ENCODE measurements at regions of chr6 and their contacts with region 1.

Region 1: DNA sequence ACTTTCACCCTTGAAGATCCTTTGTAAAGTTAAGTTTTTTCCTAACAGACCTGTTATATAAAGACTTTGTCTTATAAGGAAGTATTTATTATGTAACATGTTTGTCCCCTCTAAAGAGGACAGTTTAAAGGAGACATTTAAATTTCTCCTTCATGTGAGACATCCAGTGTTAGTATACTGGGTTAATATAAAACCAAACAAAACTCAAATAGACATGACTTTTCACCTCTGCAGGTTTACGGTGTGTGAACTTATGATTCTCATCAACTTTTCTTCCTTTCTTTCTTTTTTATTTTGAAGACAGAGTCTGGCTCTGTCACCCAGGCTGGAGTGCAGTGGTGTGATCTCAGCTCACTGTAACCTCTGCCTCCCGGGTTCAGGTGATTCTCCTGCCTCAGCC is 17.4 kb upstream of the MPC1 start:
- DNase-seq: no peak
- H3K4me3 ChIP-seq: no peak overlapping the region
- H3K27ac ChIP-seq: no peak overlapping the region
- H3K4me1 ChIP-seq: peaks cover 0 to 3% (median 2%) of the 10 kb centered on the region in 4 experiments; a peak in 3 of 7 replicates
- H3K27me3 ChIP-seq: no peaks in the 10 kb centered on the region
- CTCF ChIP-seq: no peak
- EP300 ChIP-seq: no peak
- POLR2A ChIP-seq: no peak
- RAD21 ChIP-seq: no peak

Region 2: DNA sequence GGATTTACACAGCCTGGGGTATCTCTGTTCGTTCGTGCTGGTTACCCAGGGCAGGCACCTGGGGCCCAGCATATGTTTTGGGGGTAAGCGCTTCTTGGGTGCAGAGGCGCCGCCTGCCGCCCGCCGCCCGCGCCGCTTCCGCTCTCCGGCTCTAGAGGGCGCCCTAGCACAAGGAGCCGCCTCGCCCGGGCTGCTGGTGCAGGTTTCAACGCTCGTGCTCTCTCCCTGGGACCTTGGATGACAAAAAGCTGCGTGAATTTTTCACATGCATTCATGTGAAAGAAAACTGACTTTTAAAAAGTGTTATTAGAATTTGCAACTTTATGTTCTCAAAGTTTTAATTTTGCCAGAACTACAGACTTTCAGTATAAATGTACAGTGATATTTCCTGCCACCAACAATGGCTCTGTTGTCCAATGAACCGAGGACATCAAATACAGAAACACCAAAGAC is 124.4 kb before region 1 on chr6:
- CTCF ChIA-PET with region 1: interaction called, 64 read pairs
- POLR2A ChIA-PET with region 1: no interaction called
- DNase-seq: peak in 1 of 2 experiments; percentile 98
- H3K4me3 ChIP-seq: no peak overlapping the region
- H3K27ac ChIP-seq: no peak overlapping the region
- H3K4me1 ChIP-seq: no peaks in the 10 kb centered on the region
- H3K27me3 ChIP-seq: peaks cover 0 to 8% (median 0%) of the 10 kb centered on the region in 4 experiments; a peak in 2 of 7 replicates
- CTCF ChIP-seq: peak; percentile 88 to 99 (median 88)
- EP300 ChIP-seq: no peak
- POLR2A ChIP-seq: no peak
- RAD21 ChIP-seq: peak; percentile 97 to 98

Region 3: DNA sequence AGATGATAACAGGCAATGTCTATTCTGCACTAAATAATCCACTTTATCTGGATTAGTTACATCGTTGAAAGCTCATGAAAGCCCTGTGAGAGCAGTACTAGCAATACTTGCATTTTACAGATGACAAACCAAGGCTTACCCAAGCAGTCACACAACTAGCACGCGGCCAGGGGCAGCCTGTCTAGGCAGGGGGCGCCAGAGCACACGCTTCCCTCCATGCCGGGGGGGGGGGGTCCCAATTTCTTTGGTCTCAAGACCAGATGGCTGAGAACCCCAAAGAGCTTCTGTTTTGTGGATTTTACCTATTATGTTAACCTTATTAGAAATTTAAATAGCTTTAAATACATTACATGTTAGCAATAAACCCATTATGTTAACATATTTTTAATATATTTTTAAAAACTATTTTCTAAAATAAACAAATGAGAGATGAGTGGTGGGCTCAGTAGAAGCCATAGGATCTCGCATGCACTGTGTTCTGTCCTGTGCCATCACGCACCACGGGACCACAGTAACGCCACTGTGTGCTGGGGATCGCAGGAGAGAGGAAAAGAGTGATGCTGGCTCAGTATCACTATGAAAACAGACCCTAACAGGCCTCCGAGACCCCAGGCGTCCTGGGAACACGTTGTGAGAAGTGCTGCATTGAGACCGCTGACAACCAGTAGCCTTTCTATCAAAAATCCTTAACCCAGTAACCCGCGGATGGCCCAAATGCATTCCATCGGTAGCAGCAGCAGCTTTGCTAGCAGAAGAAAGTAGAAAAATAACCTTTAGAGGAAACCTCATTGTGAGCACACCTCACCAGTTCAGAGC is 86.7 kb before region 1 on chr6:
- CTCF ChIA-PET with region 1: interaction called, 120 read pairs
- POLR2A ChIA-PET with region 1: no interaction called
- DNase-seq: peak in 1 of 2 experiments; percentile 65
- H3K4me3 ChIP-seq: no peak overlapping the region
- H3K27ac ChIP-seq: no peak overlapping the region
- H3K4me1 ChIP-seq: peaks cover 0 to 4% (median 1%) of the 10 kb centered on the region in 4 experiments; a peak in 1 of 7 replicates
- H3K27me3 ChIP-seq: peaks cover 9 to 21% (median 20%) of the 10 kb centered on the region in 4 experiments
- CTCF ChIP-seq: peak; percentile 78 to 88 (median 82)
- EP300 ChIP-seq: no peak
- POLR2A ChIP-seq: no peak
- RAD21 ChIP-seq: peak; percentile 82 to 85

Region 4: DNA sequence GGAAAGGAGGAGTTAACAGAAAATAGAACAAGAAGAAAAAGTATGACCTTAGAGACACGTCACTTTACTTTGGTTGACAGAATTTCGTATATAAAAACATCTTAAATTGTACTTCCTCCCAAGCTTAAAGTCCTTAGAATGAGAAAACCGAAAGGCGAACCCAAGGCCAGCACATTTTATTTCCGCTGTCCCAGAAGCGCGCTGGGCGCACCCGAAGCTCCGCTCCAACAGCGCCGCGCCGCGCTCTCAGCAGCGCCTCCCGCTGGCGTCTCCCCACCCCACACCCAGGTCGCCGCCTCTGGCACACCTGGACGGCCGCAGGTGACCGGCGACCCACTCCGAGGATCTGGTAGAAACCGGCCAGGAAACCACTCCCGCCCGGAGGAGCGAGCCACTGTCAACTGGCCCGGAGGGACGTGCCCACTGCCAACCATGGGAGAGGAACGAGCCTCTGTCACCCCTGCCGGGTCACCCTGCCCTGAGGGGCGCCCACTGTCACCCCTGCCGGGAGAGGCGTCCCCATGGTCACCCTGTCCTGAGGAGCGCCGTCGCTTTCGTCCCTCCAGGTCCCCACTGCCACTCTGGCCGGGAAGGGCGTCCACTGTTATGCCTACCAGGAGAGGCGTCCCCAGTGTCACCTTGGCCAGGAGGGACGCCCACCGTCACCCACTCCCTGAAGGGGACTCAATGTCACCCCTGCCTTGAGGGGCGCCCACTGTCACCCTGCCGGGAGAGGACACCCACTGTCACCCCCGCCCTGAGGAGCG is 18.3 kb before region 1 on chr6:
- CTCF ChIA-PET with region 1: interaction called, 14 read pairs
- POLR2A ChIA-PET with region 1: interaction called, 3 read pairs
- DNase-seq: peak in 1 of 2 experiments; percentile 93
- H3K4me3 ChIP-seq: peak overlapping the region; percentile 59 to 83 (median 62)
- H3K27ac ChIP-seq: no peak overlapping the region
- H3K4me1 ChIP-seq: peaks cover 0 to 4% (median 1%) of the 10 kb centered on the region in 4 experiments; a peak in 3 of 7 replicates
- H3K27me3 ChIP-seq: no peaks in the 10 kb centered on the region
- CTCF ChIP-seq: peak; percentile 69 to 90 (median 88)
- EP300 ChIP-seq: no peak
- POLR2A ChIP-seq: no peak
- RAD21 ChIP-seq: peak; percentile 64 to 74

Region 5: GRCh38 chr6:166410426-166410935 is 10.3 kb after region 1 on chr6:
- CTCF ChIA-PET with region 1: interaction called, 15 read pairs
- POLR2A ChIA-PET with region 1: no interaction called
- DNase-seq: no peak
- H3K4me3 ChIP-seq: no peak overlapping the region
- H3K27ac ChIP-seq: no peak overlapping the region
- H3K4me1 ChIP-seq: peaks cover 0 to 3% (median 0%) of the 10 kb centered on the region in 4 experiments; a peak in 2 of 7 replicates
- H3K27me3 ChIP-seq: no peaks in the 10 kb centered on the region
- CTCF ChIP-seq: no peak
- EP300 ChIP-seq: no peak
- POLR2A ChIP-seq: no peak
- RAD21 ChIP-seq: no peak

Measured in H1 (cell line).